Prostate gland (tissue), 2 donors: ENCODE measurements at regions of chr4 and their contacts with region 1.

Region 1: GRCh38 chr4:2761035-2761923 is 5.1 kb upstream of the TNIP2 start:
- DNase-seq: no peak
- H3K4me3 ChIP-seq: no peak overlapping the region
- H3K27ac ChIP-seq: no peak overlapping the region
- H3K4me1 ChIP-seq: peaks cover 3% of the 10 kb centered on the region
- H3K27me3 ChIP-seq: no peaks in the 10 kb centered on the region
- CTCF ChIP-seq: peak in 1 of 4 experiments; percentile 28
- POLR2A ChIP-seq: no peak

Region 2: DNA sequence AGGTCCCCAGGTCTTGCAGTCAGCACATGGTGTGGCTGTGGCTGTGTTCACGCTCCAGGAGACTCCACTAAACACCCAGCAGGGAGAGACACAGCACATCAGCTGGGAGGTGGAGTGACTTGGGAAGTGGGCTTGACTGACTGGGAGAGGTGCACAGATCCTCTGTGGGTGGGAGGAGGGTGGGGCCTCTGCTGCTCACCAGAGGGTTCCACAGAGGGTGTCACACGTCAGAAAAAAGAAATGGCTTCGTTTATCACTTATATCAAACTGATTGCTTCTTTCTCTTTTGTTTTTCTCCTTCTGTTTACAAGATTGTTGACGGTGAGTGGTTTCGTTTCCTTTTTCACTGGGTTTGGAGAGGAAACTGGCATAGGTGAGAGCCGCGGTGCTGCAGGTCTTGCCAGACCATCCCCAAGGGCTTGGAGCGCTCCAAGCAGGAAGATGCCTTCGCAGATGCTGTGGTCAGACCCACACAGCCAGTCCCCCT is 249.6 kb before region 1 on chr4:
- intact Hi-C with region 1: no loop called
- DNase-seq: no peak
- H3K4me3 ChIP-seq: no peak overlapping the region
- H3K27ac ChIP-seq: no peak overlapping the region
- H3K4me1 ChIP-seq: no peaks in the 10 kb centered on the region
- H3K27me3 ChIP-seq: no peaks in the 10 kb centered on the region
- CTCF ChIP-seq: no peak
- POLR2A ChIP-seq: no peak

Region 3: DNA sequence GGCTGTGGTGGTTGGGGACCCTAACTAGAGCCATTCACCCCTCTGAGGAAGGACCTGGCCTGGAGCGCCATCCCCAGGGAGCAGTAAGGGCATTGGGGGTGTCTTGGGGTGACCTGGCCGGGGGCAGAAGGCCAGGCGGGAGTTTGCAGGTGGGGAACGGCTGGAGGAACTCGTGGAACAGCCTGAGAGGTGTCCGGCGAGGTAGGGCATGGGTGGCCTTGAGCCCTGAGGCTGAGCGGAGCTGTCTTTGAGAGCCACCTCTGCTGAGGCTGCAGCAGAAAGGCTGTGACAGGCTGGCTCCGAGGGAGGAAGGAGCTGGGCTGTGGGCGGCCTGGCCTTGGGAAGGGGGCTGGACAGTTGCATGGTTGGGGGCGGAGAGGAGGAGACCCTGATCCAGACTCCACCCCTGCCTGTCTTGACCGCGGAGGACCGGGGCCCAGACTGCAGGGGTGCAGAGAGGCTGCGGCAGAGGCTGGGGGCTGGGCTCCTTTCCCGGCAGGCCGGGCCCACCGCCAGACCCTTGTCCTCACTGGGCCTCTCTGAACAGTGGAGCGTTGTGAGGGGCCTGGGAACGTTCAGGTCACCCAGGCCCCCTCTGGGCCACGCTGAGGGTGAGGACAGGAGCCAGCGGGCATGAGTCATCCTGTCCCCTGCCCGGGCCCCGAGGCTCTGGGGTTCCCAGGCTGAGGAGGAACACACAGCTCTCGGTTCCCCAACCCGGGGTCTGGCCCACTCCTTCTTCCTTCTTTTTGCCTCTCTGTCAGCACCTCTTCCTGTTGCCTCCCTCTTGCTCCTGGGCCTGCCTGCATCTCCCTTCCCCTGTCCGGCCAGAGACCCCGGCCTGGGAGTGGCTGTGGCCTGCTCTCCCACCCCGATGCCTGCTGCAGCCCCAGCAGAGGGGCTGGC is 39.7 kb after region 1 on chr4:
- intact Hi-C with region 1: no loop called
- DNase-seq: no peak
- H3K4me3 ChIP-seq: peak overlapping the region in 1 of 2 donors; percentile 3
- H3K27ac ChIP-seq: peak overlapping the region; percentile 63 to 76
- H3K4me1 ChIP-seq: peaks cover 40% of the 10 kb centered on the region
- H3K27me3 ChIP-seq: no peaks in the 10 kb centered on the region
- CTCF ChIP-seq: no peak
- POLR2A ChIP-seq: no peak

Region 4: GRCh38 chr4:2843263-2843940 is 82.1 kb after region 1 on chr4 and contains the start of gene ADD1:
- intact Hi-C with region 1: no loop called
- DNase-seq: peak; percentile 90
- H3K4me3 ChIP-seq: peak within 1 kb of the TSS; percentile 69 to 96
- H3K27ac ChIP-seq: peak within 1 kb of the TSS; percentile 92 to 95
- H3K4me1 ChIP-seq: peaks cover 2% of the 10 kb centered on the region
- H3K27me3 ChIP-seq: no peaks in the 10 kb centered on the region
- CTCF ChIP-seq: no peak
- POLR2A ChIP-seq: peak; percentile 75
- total RNA-seq, gene ADD1: 164 to 321 TPM

Region 5: GRCh38 chr4:2963175-2963965 is 202.1 kb after region 1 on chr4 and contains the starts of genes GRK4 and NOP14:
- intact Hi-C with region 1: loop called (anchors 5 kb)
- DNase-seq: peak; percentile 98
- H3K4me3 ChIP-seq: peak within 1 kb of the TSS; percentile 97
- H3K27ac ChIP-seq: peak within 1 kb of the TSS; percentile 71 to 72
- H3K4me1 ChIP-seq: no peaks in the 10 kb centered on the region
- H3K27me3 ChIP-seq: no peaks in the 10 kb centered on the region
- CTCF ChIP-seq: peak in 3 of 4 experiments; percentile 43 to 64 (median 45)
- POLR2A ChIP-seq: peak; percentile 36
- total RNA-seq, gene GRK4: 3.4 to 18.9 TPM
- total RNA-seq, gene NOP14: 16.0 to 17.8 TPM

Region 6: DNA sequence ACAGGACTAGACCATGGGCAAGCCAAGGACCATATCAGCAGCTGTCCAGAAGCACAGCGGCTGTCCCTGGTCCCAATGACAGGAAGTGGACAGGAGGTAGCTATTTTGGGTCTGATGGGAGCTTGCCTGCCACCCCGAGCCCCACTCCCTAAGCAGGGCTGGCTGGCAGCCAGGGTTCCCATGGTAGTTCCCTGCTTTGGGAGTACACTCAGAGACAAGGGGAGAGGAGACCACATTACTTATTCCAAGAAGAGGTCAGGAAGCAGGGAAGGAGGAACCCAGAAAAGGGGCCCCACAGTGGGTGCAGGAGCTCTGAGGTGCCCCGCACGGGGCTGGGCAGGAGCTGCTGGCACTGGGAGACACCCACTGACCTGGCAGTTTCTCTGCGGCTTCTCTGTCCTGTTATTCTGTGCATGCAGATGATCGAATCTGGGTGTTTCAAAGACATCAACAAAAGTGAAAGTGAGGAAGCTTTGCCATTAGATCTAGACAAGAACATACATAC is 276.7 kb after region 1 on chr4:
- intact Hi-C with region 1: loop called (anchors 5 kb)
- DNase-seq: no peak
- H3K4me3 ChIP-seq: peak overlapping the region; percentile 0 to 4
- H3K27ac ChIP-seq: no peak overlapping the region
- H3K4me1 ChIP-seq: no peaks in the 10 kb centered on the region
- H3K27me3 ChIP-seq: no peaks in the 10 kb centered on the region
- CTCF ChIP-seq: no peak
- POLR2A ChIP-seq: no peak